IMR-90 (cell line): ENCODE measurements at regions of chr9 and their contacts with region 1.

Region 1: GRCh38 chr9:72038890-72039410 is 21.5 kb downstream of the C9orf57 start:
- DNase-seq: peak; percentile 69
- ATAC-seq: peak; percentile 98
- H3K4me3 ChIP-seq: no peak overlapping the region
- H3K27ac ChIP-seq: no peak overlapping the region
- H3K4me1 ChIP-seq: no peaks in the 10 kb centered on the region
- H3K27me3 ChIP-seq: peaks cover 2% of the 10 kb centered on the region
- CTCF ChIP-seq: peak; percentile 93
- POLR2A ChIP-seq: peak; percentile 35; the same call in 1 of the 2 replicates
- RAD21 ChIP-seq: peak; percentile 94

Region 2: DNA sequence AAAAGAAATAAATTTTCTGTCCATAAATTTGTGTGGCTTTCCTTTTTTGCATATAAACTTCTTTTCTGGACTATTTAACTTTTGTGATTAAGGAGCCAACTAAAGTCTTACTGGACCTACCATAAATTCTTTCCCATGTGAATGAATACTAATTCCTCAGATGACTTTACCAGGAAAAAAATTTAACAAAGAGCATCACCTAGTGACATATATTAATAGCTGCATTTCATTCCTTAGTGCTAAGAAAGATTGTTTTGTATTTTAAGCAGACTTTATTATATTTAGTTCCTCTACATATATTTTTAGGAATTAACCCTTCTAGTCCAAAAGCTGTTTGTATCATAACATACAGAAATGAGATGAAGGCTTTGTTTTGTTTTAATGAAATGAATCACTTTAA is 63.1 kb before region 1 on chr9:
- CTCF ChIA-PET with region 1: no interaction called
- POLR2A ChIA-PET with region 1: no interaction called
- dilution Hi-C with region 1: no loop called
- in situ Hi-C with region 1: loop called (anchors 10 kb)
- intact Hi-C with region 1: no loop called
- DNase-seq: no peak
- ATAC-seq: no peak
- H3K4me3 ChIP-seq: no peak overlapping the region
- H3K27ac ChIP-seq: no peak overlapping the region
- H3K4me1 ChIP-seq: no peaks in the 10 kb centered on the region
- H3K27me3 ChIP-seq: no peaks in the 10 kb centered on the region
- CTCF ChIP-seq: peak; percentile 30
- POLR2A ChIP-seq: no peak
- RAD21 ChIP-seq: no peak

Region 3: GRCh38 chr9:72271613-72272478 is 232.9 kb after region 1 on chr9:
- CTCF ChIA-PET with region 1: interaction called, 17 read pairs
- POLR2A ChIA-PET with region 1: no interaction called
- dilution Hi-C with region 1: no loop called
- in situ Hi-C with region 1: loop called (anchors 5 kb)
- intact Hi-C with region 1: loop called (anchors 1 kb)
- DNase-seq: peak; percentile 55
- ATAC-seq: peak; percentile 83
- H3K4me3 ChIP-seq: no peak overlapping the region
- H3K27ac ChIP-seq: no peak overlapping the region
- H3K4me1 ChIP-seq: no peaks in the 10 kb centered on the region
- H3K27me3 ChIP-seq: peaks cover 3% of the 10 kb centered on the region
- CTCF ChIP-seq: peak; percentile 78
- POLR2A ChIP-seq: no peak
- RAD21 ChIP-seq: peak; percentile 70

Region 4: DNA sequence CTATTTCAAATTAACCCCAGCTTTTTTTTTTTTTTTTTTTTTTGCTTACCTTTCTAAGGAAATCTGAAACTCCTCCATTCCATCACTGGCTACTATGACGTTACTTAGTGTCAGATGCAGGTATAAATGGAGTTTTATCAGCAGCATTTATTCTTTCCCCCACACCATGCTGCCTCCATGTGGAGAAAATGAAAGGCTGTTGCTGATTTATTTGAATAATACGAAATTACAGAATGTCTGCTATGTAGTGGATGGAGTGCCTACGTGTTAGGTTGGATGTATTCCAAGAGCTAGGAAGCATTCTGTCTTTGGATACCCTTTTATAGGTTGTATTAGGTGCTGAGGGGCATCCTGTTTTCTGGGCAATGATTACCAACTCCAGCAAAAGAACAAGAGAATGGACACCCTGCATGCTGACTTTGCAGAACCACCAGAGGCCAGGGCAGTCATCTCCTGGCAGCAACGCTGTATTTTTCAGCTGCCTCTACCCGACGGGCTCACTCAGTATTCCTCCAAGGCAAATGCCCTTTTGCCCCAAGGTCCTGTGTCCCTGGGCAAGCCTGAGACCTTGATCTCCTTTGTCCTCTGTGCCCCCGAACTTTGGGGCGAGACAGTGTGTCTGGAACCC is 714.4 kb after region 1 on chr9:
- CTCF ChIA-PET with region 1: no interaction called
- POLR2A ChIA-PET with region 1: no interaction called
- dilution Hi-C with region 1: no loop called
- in situ Hi-C with region 1: no loop called
- intact Hi-C with region 1: loop called (anchors 10 kb)
- DNase-seq: peak; percentile 31
- ATAC-seq: peak; percentile 60; the same call in 1 of the 2 replicates
- H3K4me3 ChIP-seq: no peak overlapping the region
- H3K27ac ChIP-seq: no peak overlapping the region
- H3K4me1 ChIP-seq: no peaks in the 10 kb centered on the region
- H3K27me3 ChIP-seq: peaks cover 4% of the 10 kb centered on the region
- CTCF ChIP-seq: peak; percentile 64
- POLR2A ChIP-seq: no peak
- RAD21 ChIP-seq: peak; percentile 73

Region 5: DNA sequence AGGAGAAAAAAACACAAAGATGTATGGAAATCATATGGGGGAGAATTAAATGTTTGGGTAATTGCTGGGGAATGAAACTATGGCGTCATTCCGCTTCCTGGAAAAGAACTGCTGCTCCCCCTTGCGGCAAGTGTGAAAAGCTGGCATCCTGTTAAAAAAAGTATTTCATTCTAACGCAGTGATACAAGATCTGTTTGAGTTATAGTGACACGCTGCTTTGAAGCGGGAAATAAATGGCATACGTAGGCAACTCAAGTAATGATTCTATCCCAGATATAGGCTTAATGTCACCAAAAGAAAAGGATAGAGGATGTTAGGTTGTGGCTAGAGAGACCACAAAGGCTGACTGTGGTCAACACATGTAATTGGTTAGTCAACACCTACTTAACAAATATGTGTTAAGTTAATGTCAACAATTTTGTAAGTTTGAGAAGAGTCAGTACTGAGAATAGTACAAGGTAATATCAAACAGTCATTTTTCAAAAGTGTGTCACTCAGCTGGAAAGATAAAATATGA is 984.1 kb after region 1 on chr9:
- CTCF ChIA-PET with region 1: no interaction called
- POLR2A ChIA-PET with region 1: no interaction called
- dilution Hi-C with region 1: no loop called
- in situ Hi-C with region 1: no loop called
- intact Hi-C with region 1: loop called (anchors 10 kb)
- DNase-seq: peak; percentile 63
- ATAC-seq: peak; percentile 74
- H3K4me3 ChIP-seq: no peak overlapping the region
- H3K27ac ChIP-seq: no peak overlapping the region
- H3K4me1 ChIP-seq: no peaks in the 10 kb centered on the region
- H3K27me3 ChIP-seq: no peaks in the 10 kb centered on the region
- CTCF ChIP-seq: peak; percentile 82
- POLR2A ChIP-seq: no peak
- RAD21 ChIP-seq: peak; percentile 65